ENCODE measurements at regions of chr13 and their contacts with region 1.

Region 1: GRCh38 chr13:23609414-23609760 is 39.2 kb downstream of the TNFRSF19 start:
- DNase-seq: peak in 2 of 5 donors; percentile 28 to 50
- ATAC-seq: peak in 2 of 4 donors; percentile 60 to 64
- H3K4me3 ChIP-seq: peak overlapping the region in 8 of 12 donors; percentile 8 to 36 (median 20)
- H3K27ac ChIP-seq: peak overlapping the region; percentile 26 to 79 (median 54)
- H3K4me1 ChIP-seq: peaks cover 0 to 43% (median 34%) of the 10 kb centered on the region in 12 donors
- H3K27me3 ChIP-seq: no peaks in the 10 kb centered on the region
- CTCF ChIP-seq: no peak
- POLR2A ChIP-seq: no peak

Region 2: GRCh38 chr13:22925881-22926747 is 683.3 kb before region 1 on chr13:
- intact Hi-C with region 1: no loop called
- DNase-seq: peak; percentile 60 to 91 (median 81)
- ATAC-seq: peak; percentile 68 to 98 (median 90)
- H3K4me3 ChIP-seq: peak overlapping the region in 11 of 12 donors; percentile 10 to 58 (median 44)
- H3K27ac ChIP-seq: peak overlapping the region in 2 of 12 donors; percentile 34 to 81
- H3K4me1 ChIP-seq: peaks cover 0 to 11% (median 0%) of the 10 kb centered on the region in 12 donors
- H3K27me3 ChIP-seq: peaks cover 0 to 7% (median 0%) of the 10 kb centered on the region in 9 donors
- CTCF ChIP-seq: no peak
- POLR2A ChIP-seq: no peak

Region 3: GRCh38 chr13:23588642-23589041 is 20.7 kb before region 1 on chr13:
- intact Hi-C with region 1: loop called in 1 of 10 experiments (anchors 2 kb)
- DNase-seq: no peak
- ATAC-seq: no peak
- H3K4me3 ChIP-seq: no peak overlapping the region
- H3K27ac ChIP-seq: no peak overlapping the region
- H3K4me1 ChIP-seq: peaks cover 0 to 20% (median under 1%) of the 10 kb centered on the region in 12 donors
- H3K27me3 ChIP-seq: no peaks in the 10 kb centered on the region
- CTCF ChIP-seq: no peak
- POLR2A ChIP-seq: no peak

Region 4: GRCh38 chr13:23656637-23657371 is 47.4 kb after region 1 on chr13:
- intact Hi-C with region 1: loop called in 3 of 10 experiments (anchors 5 to 10 kb)
- DNase-seq: peak in 4 of 5 donors; percentile 43 to 69 (median 56)
- ATAC-seq: peak; percentile 65 to 85 (median 72)
- H3K4me3 ChIP-seq: no peak overlapping the region
- H3K27ac ChIP-seq: peak overlapping the region in 11 of 12 donors; percentile 2 to 74 (median 56)
- H3K4me1 ChIP-seq: peaks cover 0 to 72% (median 46%) of the 10 kb centered on the region in 12 donors
- H3K27me3 ChIP-seq: no peaks in the 10 kb centered on the region
- CTCF ChIP-seq: no peak
- POLR2A ChIP-seq: no peak

Region 5: DNA sequence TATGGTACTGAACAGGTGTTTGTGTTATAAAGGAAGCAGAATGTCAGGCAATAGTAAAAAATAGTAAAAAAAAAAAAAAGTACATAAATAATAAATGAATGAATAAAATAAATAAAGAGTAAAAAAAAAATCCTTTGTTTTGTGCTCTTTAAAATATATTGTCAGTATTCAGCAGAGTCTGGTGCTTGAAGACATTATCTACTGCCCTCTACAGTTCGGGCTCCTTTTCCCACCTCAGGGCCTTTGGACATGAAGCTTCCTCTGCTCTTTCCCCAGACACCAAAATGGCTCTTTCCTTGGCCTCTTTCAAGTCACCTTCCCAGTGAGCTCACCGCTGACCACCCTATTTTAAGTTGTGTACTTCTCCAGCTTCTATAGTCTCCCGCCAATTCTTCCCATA is 98.3 kb after region 1 on chr13:
- intact Hi-C with region 1: loop called in 1 of 10 experiments (anchors 10 kb)
- DNase-seq: no peak
- ATAC-seq: no peak
- H3K4me3 ChIP-seq: no peak overlapping the region
- H3K27ac ChIP-seq: no peak overlapping the region
- H3K4me1 ChIP-seq: peaks cover 0 to 19% (median 8%) of the 10 kb centered on the region in 12 donors
- H3K27me3 ChIP-seq: no peaks in the 10 kb centered on the region
- CTCF ChIP-seq: peak in 7 of 12 donors; percentile 5 to 40 (median 25)
- POLR2A ChIP-seq: no peak